SK-N-SH (cell line): ENCODE measurements at regions of chr16 and their contacts with region 1.

Region 1: DNA sequence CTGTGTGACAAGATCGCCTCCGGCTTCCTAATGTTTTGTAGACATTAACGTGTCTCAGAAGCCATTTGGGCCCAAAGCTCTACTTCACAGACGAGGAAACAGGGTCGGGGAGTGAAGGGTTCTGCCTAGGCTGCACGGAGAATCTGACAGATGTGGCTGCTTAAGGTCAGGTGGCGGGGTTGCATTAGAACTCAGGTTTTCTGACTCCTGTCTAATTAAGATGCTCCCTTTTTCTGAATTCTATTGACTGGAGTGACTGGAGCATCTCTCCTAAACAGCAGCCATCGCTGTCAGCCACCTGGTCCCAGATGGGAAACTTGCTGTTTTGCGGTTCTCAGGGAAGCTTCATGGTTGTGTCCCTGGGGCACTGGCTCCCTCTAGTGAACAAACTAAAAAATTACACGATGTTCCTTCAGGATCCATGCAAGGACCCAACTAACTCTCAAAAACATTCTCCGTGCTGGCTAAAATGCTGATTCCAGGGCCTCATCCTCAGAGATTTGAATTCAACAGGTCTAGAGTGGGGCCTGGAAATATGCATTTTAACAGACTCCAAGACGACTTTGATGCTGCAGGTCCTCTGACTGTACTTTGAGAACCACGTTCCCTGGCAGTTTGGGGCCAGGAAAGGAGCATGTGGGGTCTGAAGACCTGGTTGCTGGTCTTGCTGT is 117.4 kb downstream of the IRF8 start:
- DNase-seq: peak; percentile 73
- H3K4me3 ChIP-seq: no peak overlapping the region
- H3K27ac ChIP-seq: no peak overlapping the region
- H3K4me1 ChIP-seq: no peaks in the 10 kb centered on the region
- H3K27me3 ChIP-seq: peaks cover 5% of the 10 kb centered on the region; the same call in 1 of the 2 replicates
- CTCF ChIP-seq: peak; percentile 75
- EP300 ChIP-seq: no peak
- RAD21 ChIP-seq: peak; percentile 88

Region 2: DNA sequence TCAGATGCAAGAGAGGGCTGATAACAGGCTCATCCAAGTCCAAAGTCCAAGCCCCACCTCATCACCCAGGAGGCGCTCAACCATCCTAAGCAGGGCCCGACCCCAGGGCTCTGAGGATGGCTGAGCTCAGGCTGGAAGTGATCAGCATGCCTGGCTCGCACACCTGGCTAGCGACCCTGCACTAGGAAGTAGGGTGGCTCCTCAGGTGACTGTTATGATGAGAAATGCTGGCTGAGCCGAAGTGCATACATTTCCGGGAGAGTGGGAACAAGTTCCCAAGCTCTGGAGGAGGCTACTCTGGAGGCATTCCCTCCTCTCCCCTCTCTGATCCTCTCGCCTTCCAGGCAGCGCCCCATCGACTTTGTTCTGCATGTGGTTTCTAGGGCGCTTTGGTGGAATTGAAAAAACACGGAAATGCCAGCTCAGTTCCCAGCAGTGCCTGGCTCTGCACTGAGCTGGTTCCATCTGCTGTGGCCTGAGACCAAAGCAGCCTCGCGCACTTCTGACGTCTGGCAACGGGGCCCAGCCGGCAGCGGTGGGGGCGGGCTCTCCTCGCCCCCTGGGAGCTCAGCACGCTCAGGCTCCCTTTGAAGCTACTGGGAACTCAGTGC is 12.9 kb after region 1 on chr16:
- CTCF ChIA-PET with region 1: interaction called, 10 read pairs
- POLR2A ChIA-PET with region 1: no interaction called
- DNase-seq: no peak
- H3K4me3 ChIP-seq: no peak overlapping the region
- H3K27ac ChIP-seq: no peak overlapping the region
- H3K4me1 ChIP-seq: no peaks in the 10 kb centered on the region
- H3K27me3 ChIP-seq: peaks cover 68% of the 10 kb centered on the region
- CTCF ChIP-seq: no peak
- EP300 ChIP-seq: no peak
- RAD21 ChIP-seq: no peak

Region 3: GRCh38 chr16:86227801-86228200 is 211.5 kb after region 1 on chr16:
- CTCF ChIA-PET with region 1: no interaction called
- POLR2A ChIA-PET with region 1: no interaction called
- DNase-seq: no peak
- H3K4me3 ChIP-seq: no peak overlapping the region
- H3K27ac ChIP-seq: no peak overlapping the region
- H3K4me1 ChIP-seq: no peaks in the 10 kb centered on the region
- H3K27me3 ChIP-seq: peaks cover 56% of the 10 kb centered on the region
- CTCF ChIP-seq: no peak
- EP300 ChIP-seq: no peak
- RAD21 ChIP-seq: no peak